Activated naive CD4-positive, alpha-beta T cell treated with anti-CD3 and anti-CD28 coated beads for 36 hours (primary cell): ENCODE measurements at regions of chr4 and their contacts with region 1.

Region 1: GRCh38 chr4:27048429-27049238 is 188.0 kb downstream of the STIM2 start:
- DNase-seq: no peak
- H3K4me3 Mint-ChIP-seq: no peak overlapping the region
- H3K27ac Mint-ChIP-seq: no peak overlapping the region
- H3K4me1 Mint-ChIP-seq: peaks cover 8% of the 10 kb centered on the region
- H3K27me3 Mint-ChIP-seq: peaks cover 39% of the 10 kb centered on the region

Region 2: DNA sequence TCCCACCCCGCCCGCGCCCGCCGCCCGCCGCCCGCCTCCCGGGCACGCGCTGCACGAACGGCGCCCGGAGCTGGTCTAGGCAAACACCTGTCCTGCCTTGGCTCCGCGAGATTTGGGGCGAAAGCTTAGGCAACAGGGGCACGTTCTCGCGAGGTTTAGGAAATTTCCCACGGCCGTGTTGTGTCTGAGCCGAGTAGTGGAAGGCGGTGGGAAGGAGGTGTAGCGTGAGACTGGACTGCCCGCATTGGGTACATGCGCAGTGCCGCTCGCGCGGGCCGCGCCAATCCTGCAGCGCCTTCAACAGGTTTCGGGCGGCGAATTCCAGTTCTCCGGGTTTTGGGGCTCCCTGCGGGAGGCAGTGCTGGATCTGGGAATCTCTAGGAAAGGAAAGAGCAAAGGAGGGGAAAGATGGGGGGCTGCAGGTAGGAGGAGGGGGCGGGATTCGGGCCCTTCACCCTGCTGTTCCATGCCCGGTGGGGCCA is 729.1 kb before region 1 on chr4:
- CTCF ChIA-PET with region 1: no interaction called
- intact Hi-C with region 1: no loop called
- DNase-seq: peak; percentile 99
- H3K4me3 Mint-ChIP-seq: peak overlapping the region; percentile 97
- H3K27ac Mint-ChIP-seq: peak overlapping the region; percentile 99
- H3K4me1 Mint-ChIP-seq: peaks cover 26% of the 10 kb centered on the region
- H3K27me3 Mint-ChIP-seq: no peaks in the 10 kb centered on the region

Region 3: GRCh38 chr4:26826721-26827120 is 221.9 kb before region 1 on chr4:
- CTCF ChIA-PET with region 1: no interaction called
- intact Hi-C with region 1: no loop called
- DNase-seq: no peak
- H3K4me3 Mint-ChIP-seq: no peak overlapping the region
- H3K27ac Mint-ChIP-seq: no peak overlapping the region
- H3K4me1 Mint-ChIP-seq: peaks cover 13% of the 10 kb centered on the region
- H3K27me3 Mint-ChIP-seq: no peaks in the 10 kb centered on the region

Region 4: GRCh38 chr4:26992657-26993361 is 55.8 kb before region 1 on chr4:
- CTCF ChIA-PET with region 1: no interaction called
- intact Hi-C with region 1: no loop called
- DNase-seq: peak; percentile 47
- H3K4me3 Mint-ChIP-seq: no peak overlapping the region
- H3K27ac Mint-ChIP-seq: no peak overlapping the region
- H3K4me1 Mint-ChIP-seq: peaks cover 26% of the 10 kb centered on the region
- H3K27me3 Mint-ChIP-seq: no peaks in the 10 kb centered on the region

Region 5: GRCh38 chr4:27084685-27085361 is 36.2 kb after region 1 on chr4:
- CTCF ChIA-PET with region 1: interaction called, 5 read pairs
- intact Hi-C with region 1: loop called (anchors 2 kb)
- DNase-seq: peak; percentile 36
- H3K4me3 Mint-ChIP-seq: no peak overlapping the region
- H3K27ac Mint-ChIP-seq: no peak overlapping the region
- H3K4me1 Mint-ChIP-seq: peaks cover 7% of the 10 kb centered on the region
- H3K27me3 Mint-ChIP-seq: peaks cover 57% of the 10 kb centered on the region

Region 6: DNA sequence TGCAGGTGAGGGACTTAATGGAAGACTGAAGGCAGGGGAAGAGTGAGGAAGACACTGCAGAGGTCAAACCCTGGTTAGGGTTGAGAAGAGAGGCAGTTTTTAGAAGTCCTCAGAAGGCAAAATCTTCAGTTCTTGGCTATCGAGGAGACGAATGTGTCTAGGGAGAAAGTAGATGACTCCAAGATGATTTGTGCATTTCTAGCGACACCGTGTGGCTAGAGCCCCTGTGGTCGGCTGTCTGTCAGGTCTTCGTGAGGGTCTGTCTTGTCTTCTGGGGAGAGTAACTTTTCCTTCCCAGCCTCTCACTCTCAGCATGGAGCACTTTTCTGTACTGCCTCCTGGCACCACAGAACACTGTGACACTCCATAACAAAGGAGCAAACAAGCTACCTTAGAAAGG is 270.1 kb after region 1 on chr4:
- CTCF ChIA-PET with region 1: interaction called, 6 read pairs
- intact Hi-C with region 1: loop called (anchors 1 kb)
- DNase-seq: peak; percentile 50
- H3K4me3 Mint-ChIP-seq: no peak overlapping the region
- H3K27ac Mint-ChIP-seq: no peak overlapping the region
- H3K4me1 Mint-ChIP-seq: no peaks in the 10 kb centered on the region
- H3K27me3 Mint-ChIP-seq: peaks cover 4% of the 10 kb centered on the region

Region 7: DNA sequence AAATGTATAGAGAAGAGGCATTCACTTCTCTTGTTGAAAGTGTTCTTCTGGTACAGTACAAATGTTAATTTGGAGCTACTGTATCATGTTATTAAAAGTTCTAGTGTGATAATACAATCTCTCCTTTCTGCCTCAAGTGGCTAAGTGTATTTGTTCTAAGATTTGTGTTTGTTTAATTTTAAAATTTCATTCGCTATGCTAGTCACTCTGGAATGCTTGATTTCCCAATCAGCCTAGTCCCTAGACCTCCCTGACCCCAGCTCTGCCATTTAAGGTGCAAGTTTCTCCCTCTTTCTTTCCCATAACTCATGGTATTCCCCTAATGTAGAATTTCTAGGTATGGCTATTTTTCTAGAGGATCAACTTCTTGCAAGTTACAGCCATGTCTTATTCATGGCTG is 629.4 kb after region 1 on chr4:
- CTCF ChIA-PET with region 1: no interaction called
- intact Hi-C with region 1: loop called (anchors 10 kb)
- DNase-seq: no peak
- H3K4me3 Mint-ChIP-seq: no peak overlapping the region
- H3K27ac Mint-ChIP-seq: no peak overlapping the region
- H3K4me1 Mint-ChIP-seq: no peaks in the 10 kb centered on the region
- H3K27me3 Mint-ChIP-seq: no peaks in the 10 kb centered on the region